ENCODE measurements at regions of chr19 and their contacts with region 1.

Region 1: GRCh38 chr19:12777217-12778016 is 2.1 kb upstream of the HOOK2 start:
- DNase-seq: peak; percentile 91
- H3K4me3 ChIP-seq: peak overlapping the region; percentile 48
- H3K27ac ChIP-seq: peak overlapping the region; percentile 73
- H3K4me1 ChIP-seq: peaks cover 23% of the 10 kb centered on the region
- H3K27me3 ChIP-seq: no peaks in the 10 kb centered on the region
- CTCF ChIP-seq: peak; percentile 98

Region 2: DNA sequence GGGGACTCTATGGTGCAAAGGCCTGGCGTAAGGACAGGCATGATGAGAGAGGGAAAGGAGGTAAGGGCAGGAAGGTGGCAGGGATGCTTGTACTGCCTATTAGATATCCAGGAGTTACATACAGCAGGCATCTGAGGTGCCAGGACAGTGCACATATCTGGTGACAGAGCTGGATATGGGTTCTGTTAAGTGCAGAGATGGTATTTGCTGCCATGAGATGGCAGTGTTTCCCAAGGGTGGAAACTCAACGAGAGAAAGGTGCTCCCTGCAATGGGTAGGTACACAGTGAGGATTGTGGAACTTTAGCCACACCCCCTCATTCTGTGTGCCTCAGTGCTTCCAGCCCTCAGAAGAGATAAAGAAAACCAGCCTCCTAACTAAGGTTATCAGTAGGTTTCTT is 60.6 kb before region 1 on chr19:
- CTCF ChIA-PET with region 1: no interaction called
- POLR2A ChIA-PET with region 1: no interaction called
- intact Hi-C with region 1: no loop called
- DNase-seq: peak; percentile 66
- H3K4me3 ChIP-seq: no peak overlapping the region
- H3K27ac ChIP-seq: no peak overlapping the region
- H3K4me1 ChIP-seq: peaks cover 5% of the 10 kb centered on the region
- H3K27me3 ChIP-seq: no peaks in the 10 kb centered on the region
- CTCF ChIP-seq: peak; percentile 46

Region 3: DNA sequence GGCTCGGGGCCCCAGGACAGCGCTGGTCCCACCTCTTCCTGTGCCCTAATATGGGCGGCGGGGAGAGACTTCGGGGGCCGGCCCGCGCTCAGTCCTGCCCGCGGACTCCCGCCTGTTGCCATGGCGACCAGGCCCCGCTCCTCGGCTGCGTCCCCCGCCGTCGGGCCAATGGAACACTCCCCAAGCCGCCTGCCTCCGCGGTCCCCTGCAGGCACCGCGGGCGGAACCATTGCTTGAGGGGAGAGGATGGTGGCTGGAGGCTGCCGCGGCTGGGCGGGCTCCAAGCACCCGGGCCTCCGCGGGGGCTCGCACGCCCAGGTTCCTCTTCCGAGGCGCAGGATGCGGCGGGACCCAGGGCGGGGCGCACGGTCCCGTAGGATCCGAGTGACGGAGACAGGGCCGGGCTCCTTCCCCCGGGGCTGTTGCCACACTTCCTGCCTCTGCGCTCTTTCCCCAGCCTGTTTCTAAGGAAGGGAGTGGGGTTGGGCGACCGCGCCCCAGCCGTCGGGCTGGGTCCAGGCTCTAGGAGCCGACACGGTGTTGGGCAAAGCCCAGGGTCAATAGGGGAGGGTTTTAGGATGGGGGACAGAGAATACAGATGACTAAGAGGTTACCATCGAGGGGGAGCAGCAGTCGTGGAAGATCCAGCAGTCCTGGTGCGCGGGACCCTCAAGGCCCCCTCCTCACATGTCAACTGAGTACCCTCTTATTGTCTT is 12.6 kb after region 1 on chr19:
- CTCF ChIA-PET with region 1: interaction called, 29 read pairs
- POLR2A ChIA-PET with region 1: interaction called, 6 read pairs
- intact Hi-C with region 1: no loop called
- DNase-seq: peak; percentile 99
- H3K4me3 ChIP-seq: peak overlapping the region; percentile 59
- H3K27ac ChIP-seq: peak overlapping the region; percentile 98
- H3K4me1 ChIP-seq: peaks cover 34% of the 10 kb centered on the region
- H3K27me3 ChIP-seq: no peaks in the 10 kb centered on the region
- CTCF ChIP-seq: no peak

Region 4: GRCh38 chr19:12796146-12797071 is 19.0 kb after region 1 on chr19:
- CTCF ChIA-PET with region 1: interaction called, 29 read pairs
- POLR2A ChIA-PET with region 1: interaction called, 6 read pairs
- intact Hi-C with region 1: loop called (anchors 1 kb)
- DNase-seq: peak; percentile 91
- H3K4me3 ChIP-seq: no peak overlapping the region
- H3K27ac ChIP-seq: no peak overlapping the region
- H3K4me1 ChIP-seq: peaks cover 23% of the 10 kb centered on the region
- H3K27me3 ChIP-seq: no peaks in the 10 kb centered on the region
- CTCF ChIP-seq: peak; percentile 94